B cell (primary cell): ENCODE measurements at regions of chr6 and their contacts with region 1.

Region 1: GRCh38 chr6:87832025-87832825 is 130.2 kb upstream of the AKIRIN2 start:
- DNase-seq: peak; percentile 73
- ATAC-seq: peak; percentile 74
- H3K4me3 ChIP-seq: peak overlapping the region; percentile 42 to 81 (median 64)
- H3K4me3 Mint-ChIP-seq: peak overlapping the region; percentile 89
- H3K27ac ChIP-seq: peak overlapping the region; percentile 74 to 89
- H3K27ac Mint-ChIP-seq: peak overlapping the region; percentile 78
- H3K4me1 ChIP-seq: peaks cover 6 to 7% of the 10 kb centered on the region in 2 donors
- H3K4me1 Mint-ChIP-seq: peaks cover 14% of the 10 kb centered on the region
- H3K27me3 ChIP-seq: no peaks in the 10 kb centered on the region
- H3K27me3 Mint-ChIP-seq: no peaks in the 10 kb centered on the region
- CTCF ChIP-seq: peak; percentile 76

Region 2: GRCh38 chr6:87922947-87923330 is 90.7 kb after region 1 on chr6:
- CTCF ChIA-PET with region 1: interaction called, 22 read pairs
- POLR2A ChIA-PET with region 1: no interaction called
- intact Hi-C with region 1: loop called (anchors 1 kb)
- DNase-seq: peak; percentile 86
- ATAC-seq: peak; percentile 77
- H3K4me3 ChIP-seq: no peak overlapping the region
- H3K4me3 Mint-ChIP-seq: peak overlapping the region; percentile 63
- H3K27ac ChIP-seq: peak overlapping the region; percentile 63 to 91
- H3K27ac Mint-ChIP-seq: peak overlapping the region; percentile 92
- H3K4me1 ChIP-seq: peaks cover 90% of the 10 kb centered on the region in 2 donors
- H3K4me1 Mint-ChIP-seq: peaks cover 91% of the 10 kb centered on the region
- H3K27me3 ChIP-seq: no peaks in the 10 kb centered on the region
- H3K27me3 Mint-ChIP-seq: no peaks in the 10 kb centered on the region
- CTCF ChIP-seq: no peak

Region 3: DNA sequence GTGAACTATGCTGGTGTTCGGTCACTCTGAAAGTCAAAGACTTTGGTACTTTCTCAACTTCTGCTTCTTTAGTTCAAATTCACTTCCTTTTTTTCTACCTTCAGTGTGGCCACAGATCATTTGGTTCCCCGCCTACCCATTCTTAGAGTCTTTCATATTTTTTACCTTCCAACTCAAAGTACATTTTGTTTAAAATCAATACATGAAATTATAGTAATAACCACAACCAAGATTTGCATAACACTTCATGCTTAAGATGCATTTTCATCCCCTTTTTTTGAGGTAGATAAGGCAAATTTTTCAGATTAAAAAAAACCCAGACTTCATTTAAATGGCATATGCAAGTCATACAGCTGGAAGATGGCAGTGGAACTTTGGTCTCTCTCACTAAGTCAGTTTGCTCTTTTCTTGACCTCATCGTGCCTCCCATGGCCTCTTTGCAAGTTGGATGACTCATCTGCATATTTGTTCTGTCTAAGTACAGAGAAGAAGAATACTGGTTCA is 345.8 kb after region 1 on chr6:
- CTCF ChIA-PET with region 1: interaction called, 17 read pairs
- POLR2A ChIA-PET with region 1: interaction called, 17 read pairs
- intact Hi-C with region 1: no loop called
- DNase-seq: peak; percentile 79
- ATAC-seq: peak; percentile 61
- H3K4me3 ChIP-seq: peak overlapping the region in 1 of 5 experiments; percentile 45
- H3K4me3 Mint-ChIP-seq: peak overlapping the region; percentile 57
- H3K27ac ChIP-seq: peak overlapping the region; percentile 61 to 85
- H3K27ac Mint-ChIP-seq: peak overlapping the region; percentile 81
- H3K4me1 ChIP-seq: peaks cover 52 to 63% of the 10 kb centered on the region in 2 donors
- H3K4me1 Mint-ChIP-seq: peaks cover 58% of the 10 kb centered on the region
- H3K27me3 ChIP-seq: no peaks in the 10 kb centered on the region
- H3K27me3 Mint-ChIP-seq: no peaks in the 10 kb centered on the region
- CTCF ChIP-seq: no peak

Region 4: DNA sequence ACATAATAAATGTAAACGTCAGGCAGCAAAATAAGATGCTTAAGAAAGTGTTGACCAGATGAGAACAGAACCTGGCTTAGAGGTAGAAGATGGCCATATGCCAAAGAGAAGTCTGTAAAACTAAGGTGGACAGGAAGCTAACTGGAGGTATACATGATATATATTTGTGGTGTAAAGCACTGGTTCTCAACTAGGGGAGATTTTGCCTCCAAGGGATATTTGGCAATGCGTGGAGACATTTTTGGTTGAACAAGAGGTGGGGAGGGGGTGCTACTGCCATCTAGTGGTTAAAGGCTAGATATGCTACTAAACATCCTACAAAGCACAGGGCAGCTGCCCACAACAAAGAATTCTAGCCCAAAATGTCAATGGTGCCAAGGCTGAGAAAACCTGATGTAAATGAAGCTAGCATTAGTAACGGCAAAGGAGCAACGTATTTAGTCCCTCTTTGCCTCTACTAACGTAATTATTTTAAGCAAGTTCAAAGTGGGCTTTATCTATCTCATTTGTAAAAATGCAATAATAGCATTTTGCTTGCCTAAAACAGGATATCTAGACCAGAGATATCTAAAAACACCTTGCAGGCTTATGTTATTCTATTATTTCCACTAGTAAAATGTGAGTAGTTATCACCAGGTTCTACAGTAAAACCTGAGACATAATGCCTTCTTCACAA is 948.6 kb after region 1 on chr6:
- CTCF ChIA-PET with region 1: interaction called, 38 read pairs
- POLR2A ChIA-PET with region 1: no interaction called
- intact Hi-C with region 1: loop called (anchors 1 kb)
- DNase-seq: peak; percentile 82
- ATAC-seq: peak; percentile 81
- H3K4me3 ChIP-seq: no peak overlapping the region
- H3K4me3 Mint-ChIP-seq: no peak overlapping the region
- H3K27ac ChIP-seq: no peak overlapping the region
- H3K27ac Mint-ChIP-seq: no peak overlapping the region
- H3K4me1 ChIP-seq: peaks cover 0 to 13% of the 10 kb centered on the region in 2 donors
- H3K4me1 Mint-ChIP-seq: peaks cover 16% of the 10 kb centered on the region
- H3K27me3 ChIP-seq: no peaks in the 10 kb centered on the region
- H3K27me3 Mint-ChIP-seq: no peaks in the 10 kb centered on the region
- CTCF ChIP-seq: peak; percentile 90